K562 (cell line): ENCODE measurements at regions of chr11 and their contacts with region 1.

Region 1: DNA sequence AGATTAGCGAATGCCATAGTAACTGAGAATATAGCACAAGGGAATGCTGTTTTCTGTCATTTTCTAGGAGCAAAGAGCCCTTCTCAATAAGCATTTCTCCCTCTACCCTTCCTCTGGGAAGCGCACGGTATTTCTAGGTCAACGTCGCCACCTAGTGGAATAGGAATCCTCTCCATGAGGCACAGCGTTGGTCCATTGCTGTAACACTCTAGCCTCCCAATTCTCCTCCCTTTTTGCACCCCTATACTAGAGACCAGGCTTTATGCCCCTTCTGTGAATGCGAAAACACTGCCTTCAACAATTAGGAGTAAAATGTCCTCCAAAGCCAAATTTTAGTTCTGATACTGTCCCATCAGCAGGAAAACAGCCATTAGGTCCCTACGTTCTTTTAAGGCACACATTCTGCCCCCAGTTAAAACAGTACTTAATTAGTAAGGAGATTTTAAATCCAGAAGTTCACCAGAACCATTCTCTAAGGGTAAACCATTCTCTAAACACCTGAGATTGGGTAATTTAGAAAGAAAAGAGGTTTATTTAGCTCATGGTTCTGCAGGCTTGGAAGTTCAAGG is 12.8 kb upstream of the HYLS1 start:
- DNase-seq: peak; percentile 37 to 86 (median 58)
- ATAC-seq: peak; percentile 98
- H3K4me3 ChIP-seq: no peak overlapping the region
- H3K27ac ChIP-seq: no peak overlapping the region; the same call in 2 of the 3 replicates
- H3K4me1 ChIP-seq: peaks cover 0 to 3% of the 10 kb centered on the region in 2 experiments; a peak in 2 of 5 replicates
- H3K27me3 ChIP-seq: peaks cover 0 to 7% of the 10 kb centered on the region in 2 experiments; a peak in 2 of 5 replicates
- CTCF ChIP-seq: peak; percentile 81 to 89 (median 84)
- EP300 ChIP-seq: no peak
- POLR2A ChIP-seq: no peak
- RAD21 ChIP-seq: peak; percentile 89 to 92

Region 2: GRCh38 chr11:125091247-125091876 is 783.3 kb before region 1 on chr11:
- CTCF ChIA-PET with region 1: interaction called, 3 read pairs
- POLR2A ChIA-PET with region 1: no interaction called
- in situ Hi-C with region 1: no loop called
- intact Hi-C with region 1: loop called (anchors 5 kb)
- DNase-seq: peak; percentile 71 to 75 (median 72)
- ATAC-seq: peak; percentile 95
- H3K4me3 ChIP-seq: no peak overlapping the region
- H3K27ac ChIP-seq: no peak overlapping the region
- H3K4me1 ChIP-seq: peaks cover 0 to 7% of the 10 kb centered on the region in 2 experiments; a peak in 2 of 5 replicates
- H3K27me3 ChIP-seq: no peaks in the 10 kb centered on the region
- CTCF ChIP-seq: peak; percentile 65 to 81 (median 78)
- EP300 ChIP-seq: no peak
- POLR2A ChIP-seq: no peak
- RAD21 ChIP-seq: peak; percentile 71 to 84

Region 3: GRCh38 chr11:125553357-125553756 is 321.3 kb before region 1 on chr11:
- CTCF ChIA-PET with region 1: no interaction called
- POLR2A ChIA-PET with region 1: no interaction called
- in situ Hi-C with region 1: loop called (anchors 10 kb)
- intact Hi-C with region 1: loop called (anchors 1 kb)
- DNase-seq: no peak
- ATAC-seq: peak; percentile 29
- H3K4me3 ChIP-seq: no peak overlapping the region
- H3K27ac ChIP-seq: peak overlapping the region; percentile 69
- H3K4me1 ChIP-seq: peaks cover 19 to 58% of the 10 kb centered on the region in 2 experiments
- H3K27me3 ChIP-seq: no peaks in the 10 kb centered on the region
- CTCF ChIP-seq: no peak
- EP300 ChIP-seq: no peak
- POLR2A ChIP-seq: no peak
- RAD21 ChIP-seq: no peak

Region 4: GRCh38 chr11:125625630-125626287 is 248.9 kb before region 1 on chr11:
- CTCF ChIA-PET with region 1: no interaction called
- POLR2A ChIA-PET with region 1: no interaction called
- in situ Hi-C with region 1: no loop called
- intact Hi-C with region 1: loop called (anchors 5 kb)
- DNase-seq: peak; percentile 77 to 97 (median 82)
- ATAC-seq: peak; percentile 89
- H3K4me3 ChIP-seq: peak overlapping the region; percentile 80
- H3K27ac ChIP-seq: peak overlapping the region; percentile 93
- H3K4me1 ChIP-seq: peaks cover 9 to 10% of the 10 kb centered on the region in 2 experiments
- H3K27me3 ChIP-seq: no peaks in the 10 kb centered on the region
- CTCF ChIP-seq: no peak
- EP300 ChIP-seq: no peak
- POLR2A ChIP-seq: peak; percentile 98
- RAD21 ChIP-seq: no peak